ENCODE measurements at regions of chr18 and their contacts with region 1.

Region 1: GRCh38 chr18:23412351-23412964 is 40.6 kb upstream of the RIOK3 start:
- DNase-seq: no peak
- ATAC-seq: no peak
- H3K4me3 Mint-ChIP-seq: no peak overlapping the region
- H3K27ac Mint-ChIP-seq: no peak overlapping the region
- H3K4me1 Mint-ChIP-seq: no peaks in the 10 kb centered on the region
- H3K27me3 Mint-ChIP-seq: no peaks in the 10 kb centered on the region

Region 2: GRCh38 chr18:22734776-22735627 is 677.5 kb before region 1 on chr18:
- CTCF ChIA-PET with region 1: no interaction called
- DNase-seq: no peak
- ATAC-seq: no peak
- H3K4me3 Mint-ChIP-seq: no peak overlapping the region
- H3K27ac Mint-ChIP-seq: no peak overlapping the region
- H3K4me1 Mint-ChIP-seq: peaks cover 7% of the 10 kb centered on the region
- H3K27me3 Mint-ChIP-seq: peaks cover 25% of the 10 kb centered on the region

Region 3: GRCh38 chr18:22800551-22800951 is 611.9 kb before region 1 on chr18:
- CTCF ChIA-PET with region 1: interaction called, 12 read pairs
- DNase-seq: no peak
- ATAC-seq: no peak
- H3K4me3 Mint-ChIP-seq: no peak overlapping the region
- H3K27ac Mint-ChIP-seq: no peak overlapping the region
- H3K4me1 Mint-ChIP-seq: no peaks in the 10 kb centered on the region
- H3K27me3 Mint-ChIP-seq: peaks cover 26% of the 10 kb centered on the region

Region 4: DNA sequence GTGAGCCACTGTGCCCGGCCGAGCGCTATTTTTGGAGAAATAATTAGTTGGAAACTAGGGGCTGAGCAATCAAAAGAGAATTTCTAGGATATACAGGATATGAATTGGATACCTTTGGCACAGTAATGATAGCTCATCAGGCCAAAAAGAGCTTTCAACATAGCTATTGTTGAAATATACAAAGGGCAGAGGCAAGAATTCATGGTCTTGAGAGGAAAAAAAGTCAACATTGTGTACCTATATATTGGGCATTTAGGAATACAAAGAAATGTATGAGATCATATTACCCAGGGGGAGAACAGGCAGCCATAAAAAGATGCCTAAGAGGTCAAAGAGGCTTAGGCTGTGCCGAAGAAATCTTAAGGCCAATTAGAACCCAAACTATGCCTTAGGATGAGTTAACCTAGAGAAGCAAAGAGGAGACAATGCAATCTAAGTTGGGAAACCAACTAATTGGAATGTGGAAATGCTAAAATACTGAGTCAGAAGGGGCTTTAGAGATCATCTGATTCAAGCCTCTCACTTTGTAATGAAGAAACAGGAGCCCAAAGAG is 380.4 kb before region 1 on chr18:
- CTCF ChIA-PET with region 1: interaction called, 11 read pairs
- DNase-seq: no peak
- ATAC-seq: no peak
- H3K4me3 Mint-ChIP-seq: no peak overlapping the region
- H3K27ac Mint-ChIP-seq: no peak overlapping the region
- H3K4me1 Mint-ChIP-seq: peaks cover 5% of the 10 kb centered on the region
- H3K27me3 Mint-ChIP-seq: no peaks in the 10 kb centered on the region

Region 5: GRCh38 chr18:23131693-23132319 is 280.7 kb before region 1 on chr18:
- CTCF ChIA-PET with region 1: interaction called, 29 read pairs
- DNase-seq: peak; percentile 72
- ATAC-seq: peak; percentile 52
- H3K4me3 Mint-ChIP-seq: no peak overlapping the region
- H3K27ac Mint-ChIP-seq: no peak overlapping the region
- H3K4me1 Mint-ChIP-seq: peaks cover 18% of the 10 kb centered on the region
- H3K27me3 Mint-ChIP-seq: peaks cover 34% of the 10 kb centered on the region

Region 6: GRCh38 chr18:23401400-23402347 is 10.8 kb before region 1 on chr18:
- CTCF ChIA-PET with region 1: interaction called, 17 read pairs
- DNase-seq: no peak
- ATAC-seq: no peak
- H3K4me3 Mint-ChIP-seq: no peak overlapping the region
- H3K27ac Mint-ChIP-seq: no peak overlapping the region
- H3K4me1 Mint-ChIP-seq: peaks cover 10% of the 10 kb centered on the region
- H3K27me3 Mint-ChIP-seq: no peaks in the 10 kb centered on the region

Measured in activated CD8-positive, alpha-beta memory T cell treated with anti-CD3 and anti-CD28 coated beads, Interleukin-2, amount 10 ng/mL, durations not matched to agents 7 days and 5 days (primary cell).